PC-9 (cell line): ENCODE measurements at regions of chr1 and their contacts with region 1.

Region 1: DNA sequence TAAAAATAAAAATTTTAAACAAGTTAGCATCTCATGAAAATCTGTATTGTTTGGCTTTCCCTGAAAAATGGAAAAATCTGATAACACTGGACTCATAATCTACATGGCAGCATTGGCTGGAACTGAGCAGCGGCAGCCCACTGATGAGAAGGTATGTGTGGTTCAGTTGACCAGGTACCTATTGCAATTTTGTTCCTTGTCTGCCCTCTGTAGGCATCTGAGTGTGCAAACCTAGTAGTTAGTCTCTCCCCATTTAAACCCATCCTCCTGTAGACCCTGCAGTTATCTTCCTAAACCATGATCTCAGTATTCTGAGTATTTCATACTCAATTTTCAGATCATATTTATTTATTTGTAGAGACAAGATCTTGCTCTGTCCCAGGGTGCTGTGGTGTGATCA is 59.4 kb upstream of the SERBP1 start:
- DNase-seq: peak in 1 of 2 experiments; percentile 6
- H3K4me3 ChIP-seq: no peak overlapping the region
- H3K27ac ChIP-seq: no peak overlapping the region
- H3K4me1 ChIP-seq: no peaks in the 10 kb centered on the region
- H3K27me3 ChIP-seq: no peaks in the 10 kb centered on the region
- CTCF ChIP-seq: peak; percentile 43; the same call in 1 of the 2 replicates

Region 2: DNA sequence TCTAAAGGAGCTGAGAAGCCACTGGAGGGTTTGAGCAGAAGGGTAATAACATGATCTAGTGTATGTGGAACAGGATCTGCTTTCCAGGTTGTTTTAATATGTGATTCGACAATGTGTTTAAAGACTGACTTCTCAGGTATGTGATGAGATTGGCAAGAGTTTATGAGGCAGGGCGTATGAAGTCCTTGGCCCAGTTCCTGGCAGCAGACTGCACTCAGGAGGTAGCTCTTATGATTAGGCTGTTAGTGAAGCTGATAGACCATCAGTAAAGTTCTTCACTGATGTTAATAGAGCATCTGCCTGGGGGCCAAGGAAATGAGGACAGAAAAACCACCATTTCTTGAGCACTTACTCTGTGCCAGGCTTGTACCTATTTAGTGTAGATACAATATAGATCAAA is 17.6 kb before region 1 on chr1:
- CTCF ChIA-PET with region 1: no interaction called
- POLR2A ChIA-PET with region 1: no interaction called
- intact Hi-C with region 1: no loop called
- DNase-seq: no peak
- H3K4me3 ChIP-seq: no peak overlapping the region
- H3K27ac ChIP-seq: no peak overlapping the region
- H3K4me1 ChIP-seq: peaks cover 12% of the 10 kb centered on the region
- H3K27me3 ChIP-seq: no peaks in the 10 kb centered on the region
- CTCF ChIP-seq: no peak

Region 3: GRCh38 chr1:67814121-67814772 is 324.6 kb after region 1 on chr1:
- CTCF ChIA-PET with region 1: no interaction called
- POLR2A ChIA-PET with region 1: no interaction called
- intact Hi-C with region 1: no loop called
- DNase-seq: no peak
- H3K4me3 ChIP-seq: no peak overlapping the region
- H3K27ac ChIP-seq: no peak overlapping the region
- H3K4me1 ChIP-seq: peaks cover 19% of the 10 kb centered on the region
- H3K27me3 ChIP-seq: no peaks in the 10 kb centered on the region
- CTCF ChIP-seq: no peak

Region 4: GRCh38 chr1:68269637-68270426 is 780.2 kb after region 1 on chr1:
- CTCF ChIA-PET with region 1: no interaction called
- POLR2A ChIA-PET with region 1: interaction called, 20 read pairs
- intact Hi-C with region 1: no loop called
- DNase-seq: peak in 1 of 2 experiments; percentile 21
- H3K4me3 ChIP-seq: no peak overlapping the region
- H3K27ac ChIP-seq: no peak overlapping the region
- H3K4me1 ChIP-seq: peaks cover 15% of the 10 kb centered on the region
- H3K27me3 ChIP-seq: no peaks in the 10 kb centered on the region
- CTCF ChIP-seq: no peak